Activated CD4-positive, alpha-beta T cell treated with anti-CD3 and anti-CD28 coated beads for 36 hours (primary cell): ENCODE measurements at regions of chr22 and their contacts with region 1.

Region 1: DNA sequence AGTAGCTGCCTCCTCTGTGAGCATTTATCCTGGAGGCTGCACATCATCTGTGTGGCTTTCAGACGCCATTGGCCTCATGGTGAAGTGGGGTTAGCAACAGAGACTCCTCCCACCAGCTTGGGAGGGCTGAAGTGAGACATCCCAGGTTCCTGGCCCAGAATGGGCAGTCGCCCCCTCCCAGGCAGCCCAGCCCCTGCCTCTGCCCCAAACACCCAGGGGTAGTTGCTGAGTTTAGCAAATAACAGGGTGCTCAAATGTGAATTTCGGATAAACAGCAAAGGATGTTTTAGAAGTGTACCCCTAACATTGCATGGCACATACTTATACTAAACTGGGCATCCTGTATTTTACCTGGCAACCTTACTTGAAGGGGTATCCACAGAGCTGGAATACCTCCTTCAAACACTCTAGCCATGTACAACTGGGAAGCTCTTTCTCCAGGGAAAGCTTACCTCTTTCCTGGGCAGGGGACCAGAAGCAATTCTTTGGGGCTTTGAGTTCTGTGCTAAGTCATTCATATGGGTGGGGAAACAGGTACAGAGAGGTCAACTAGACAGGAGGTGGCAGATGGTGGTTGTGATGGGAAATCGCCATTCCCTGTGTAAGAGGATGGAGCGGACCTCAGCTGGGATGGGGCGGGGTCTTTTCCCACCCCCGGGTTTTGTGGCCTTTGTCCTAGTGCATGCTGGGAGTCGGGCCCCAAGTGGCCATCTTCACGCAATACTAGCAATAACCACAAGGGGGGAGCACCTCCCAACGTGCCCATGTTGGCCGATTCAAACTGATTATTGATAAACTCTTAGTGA is 19.3 kb downstream of the MTFP1 start:
- DNase-seq: peak; percentile 81
- ATAC-seq: peak; percentile 73
- H3K4me3 Mint-ChIP-seq: no peak overlapping the region
- H3K27ac Mint-ChIP-seq: no peak overlapping the region
- H3K4me1 Mint-ChIP-seq: peaks cover 16% of the 10 kb centered on the region
- H3K27me3 Mint-ChIP-seq: peaks cover 17% of the 10 kb centered on the region

Region 2: DNA sequence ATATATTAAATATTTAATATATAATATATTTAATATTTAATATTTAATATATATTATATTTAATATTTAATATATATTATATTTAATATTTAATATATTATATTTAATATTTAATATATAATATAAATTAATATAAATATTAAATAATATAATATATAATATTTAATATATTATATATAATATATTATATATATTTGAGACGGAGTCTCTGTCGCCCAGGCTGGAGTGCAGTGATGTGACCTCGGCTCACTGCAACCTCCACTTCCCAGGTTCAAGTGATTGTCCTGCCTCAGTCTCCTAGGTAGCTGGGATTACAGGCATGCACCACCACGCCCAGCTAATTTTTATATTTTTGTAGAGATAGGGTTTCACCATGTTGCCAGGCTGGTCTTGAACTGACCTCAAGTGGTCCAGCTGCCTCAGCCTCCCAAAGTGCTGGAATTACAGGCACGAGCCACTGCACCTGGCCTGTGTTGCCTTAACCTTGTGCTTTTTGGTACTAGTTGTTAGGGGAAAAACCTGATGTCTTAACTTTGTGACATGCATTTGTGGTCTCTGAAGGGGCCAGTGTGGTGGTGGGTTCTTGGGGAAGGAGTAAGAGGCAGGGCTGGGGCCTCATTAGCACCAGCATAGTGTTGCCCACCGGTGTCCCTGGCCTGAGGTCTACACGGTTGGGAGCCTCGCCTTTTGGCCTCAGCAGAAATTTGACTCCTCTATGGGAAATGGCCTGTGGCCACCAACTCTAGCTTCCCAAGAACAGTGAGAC is 10.4 kb after region 1 on chr22:
- CTCF ChIA-PET with region 1: interaction called, 10 read pairs
- POLR2A ChIA-PET with region 1: no interaction called
- intact Hi-C with region 1: no loop called
- DNase-seq: peak; percentile 19
- ATAC-seq: no peak
- H3K4me3 Mint-ChIP-seq: no peak overlapping the region
- H3K27ac Mint-ChIP-seq: no peak overlapping the region
- H3K4me1 Mint-ChIP-seq: no peaks in the 10 kb centered on the region
- H3K27me3 Mint-ChIP-seq: peaks cover 4% of the 10 kb centered on the region

Region 3: DNA sequence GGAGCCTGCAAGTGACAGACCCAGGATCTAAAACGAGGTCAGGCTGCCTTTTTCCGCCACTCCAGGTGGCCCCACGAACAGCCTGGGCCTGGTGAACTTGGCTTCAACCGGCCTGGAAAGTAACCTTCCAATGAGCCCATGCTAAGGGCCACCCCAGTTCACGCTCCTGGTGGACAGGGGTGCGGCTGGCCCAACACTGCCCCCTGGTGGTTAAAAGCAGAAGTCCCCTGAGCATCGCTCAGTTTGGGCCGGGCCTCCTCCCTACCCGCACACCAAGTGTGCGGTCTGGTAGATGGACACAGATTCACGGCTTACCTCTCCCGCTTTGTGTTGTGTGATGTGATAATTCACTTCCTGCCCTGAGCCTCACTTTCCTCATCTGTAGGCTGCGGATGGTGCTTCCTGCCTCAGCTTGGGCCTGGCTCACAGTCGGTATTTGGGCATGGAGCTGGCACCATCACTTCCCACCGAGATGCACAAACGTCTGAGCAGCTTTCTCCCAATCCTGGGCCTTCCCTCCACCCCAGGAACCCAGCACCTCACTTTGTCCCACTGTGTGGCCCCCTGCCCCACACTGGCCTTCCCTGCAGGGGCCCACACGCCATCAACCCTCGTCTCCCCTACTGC is 40.6 kb after region 1 on chr22:
- CTCF ChIA-PET with region 1: interaction called, 21 read pairs
- POLR2A ChIA-PET with region 1: no interaction called
- intact Hi-C with region 1: loop called (anchors 1 kb)
- DNase-seq: peak; percentile 86
- ATAC-seq: peak; percentile 100
- H3K4me3 Mint-ChIP-seq: no peak overlapping the region
- H3K27ac Mint-ChIP-seq: no peak overlapping the region
- H3K4me1 Mint-ChIP-seq: no peaks in the 10 kb centered on the region
- H3K27me3 Mint-ChIP-seq: no peaks in the 10 kb centered on the region

Region 4: DNA sequence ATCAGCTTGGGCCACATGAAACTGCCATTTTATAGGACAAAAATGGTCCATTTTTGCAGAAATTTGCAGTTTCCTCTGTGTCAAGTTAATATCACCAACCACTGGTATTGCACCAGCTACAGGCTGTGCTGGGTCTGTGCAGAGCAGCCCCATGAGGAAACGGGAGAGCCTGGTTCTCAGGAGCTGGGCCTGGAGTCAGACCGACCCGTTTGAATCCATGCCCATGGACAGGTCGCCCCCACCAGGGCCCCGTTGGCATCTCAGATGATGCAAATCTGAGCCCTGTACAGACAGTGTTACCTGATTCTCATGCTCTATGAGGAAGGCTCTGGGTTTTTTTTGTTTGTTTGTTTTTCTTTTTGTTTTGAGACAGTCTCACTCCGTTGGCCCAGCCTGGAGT is 111.6 kb after region 1 on chr22:
- CTCF ChIA-PET with region 1: no interaction called
- POLR2A ChIA-PET with region 1: no interaction called
- intact Hi-C with region 1: no loop called
- DNase-seq: no peak
- ATAC-seq: no peak
- H3K4me3 Mint-ChIP-seq: no peak overlapping the region
- H3K27ac Mint-ChIP-seq: no peak overlapping the region
- H3K4me1 Mint-ChIP-seq: no peaks in the 10 kb centered on the region
- H3K27me3 Mint-ChIP-seq: no peaks in the 10 kb centered on the region